Dendritic cell treated with granulocyte-macrophage colony-stimulating factor and Interleukin-4, amounts not matched to agents 40 ng/mL and 50 ng/mL, for 4 days (primary cell): ENCODE measurements at regions of chr3 and their contacts with region 1.

Region 1: GRCh38 chr3:99817437-99818240 is at the start of gene CMSS1:
- H3K4me3 Mint-ChIP-seq: peak within 1 kb of the TSS; percentile 92
- H3K27ac Mint-ChIP-seq: peak within 1 kb of the TSS; percentile 96
- H3K4me1 Mint-ChIP-seq: peaks cover 10% of the 10 kb centered on the region
- H3K27me3 Mint-ChIP-seq: no peaks in the 10 kb centered on the region

Region 2: DNA sequence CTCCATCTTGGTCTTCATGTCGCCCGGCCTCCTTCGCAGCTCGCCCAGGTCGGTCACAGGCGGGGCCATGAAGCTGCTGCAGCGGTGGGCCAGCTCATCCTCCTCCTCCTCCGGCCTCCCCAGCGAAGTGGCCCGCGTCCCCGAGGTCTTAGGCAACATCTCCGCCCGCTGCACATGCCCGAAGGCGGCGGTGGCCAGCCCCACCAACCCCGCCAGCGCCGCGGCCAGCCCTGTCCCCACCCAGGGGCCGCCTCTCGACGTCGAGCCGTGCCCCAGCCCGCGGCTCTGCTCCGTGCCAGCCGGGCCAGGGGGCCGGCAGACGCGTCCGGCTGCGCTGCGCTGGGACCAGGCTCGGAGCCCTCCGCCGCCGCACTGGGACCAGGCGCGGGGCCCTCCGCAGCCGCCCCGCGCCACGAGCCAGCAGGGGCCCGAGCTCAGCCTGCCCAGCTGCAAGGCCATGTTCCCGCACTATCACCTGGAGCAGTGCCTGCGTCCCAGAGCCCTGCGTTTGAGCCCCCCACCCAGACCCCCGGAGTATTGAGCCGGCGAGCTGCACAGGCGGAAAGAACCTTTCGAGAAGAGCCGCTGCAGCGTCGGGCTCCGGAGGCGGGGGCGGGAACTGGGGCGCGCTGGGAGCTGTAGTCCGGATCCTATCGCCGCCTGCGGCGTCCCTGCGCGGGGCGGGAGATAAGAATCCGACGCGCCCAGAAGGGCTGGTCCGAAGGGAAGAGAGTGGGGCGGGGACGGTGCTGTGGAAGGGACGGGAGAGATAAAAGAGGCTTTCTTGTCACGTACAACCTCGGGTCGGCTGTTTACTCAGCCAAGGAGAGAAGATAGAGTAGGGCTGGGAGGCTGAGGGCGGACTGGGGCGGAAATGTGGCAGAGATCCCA is 1224.3 kb before region 1 on chr3 and contains the start of gene CPOX:
- intact Hi-C with region 1: loop called (anchors 10 kb)
- H3K4me3 Mint-ChIP-seq: peak within 1 kb of the TSS; percentile 97
- H3K27ac Mint-ChIP-seq: peak within 1 kb of the TSS; percentile 82
- H3K4me1 Mint-ChIP-seq: peaks cover 60% of the 10 kb centered on the region
- H3K27me3 Mint-ChIP-seq: no peaks in the 10 kb centered on the region

Region 3: GRCh38 chr3:99875929-99876841 is 58.5 kb after region 1 on chr3:
- intact Hi-C with region 1: loop called (anchors 5 kb)
- H3K4me3 Mint-ChIP-seq: peak overlapping the region; percentile 74
- H3K27ac Mint-ChIP-seq: peak overlapping the region; percentile 92
- H3K4me1 Mint-ChIP-seq: peaks cover 36% of the 10 kb centered on the region
- H3K27me3 Mint-ChIP-seq: no peaks in the 10 kb centered on the region

Region 4: DNA sequence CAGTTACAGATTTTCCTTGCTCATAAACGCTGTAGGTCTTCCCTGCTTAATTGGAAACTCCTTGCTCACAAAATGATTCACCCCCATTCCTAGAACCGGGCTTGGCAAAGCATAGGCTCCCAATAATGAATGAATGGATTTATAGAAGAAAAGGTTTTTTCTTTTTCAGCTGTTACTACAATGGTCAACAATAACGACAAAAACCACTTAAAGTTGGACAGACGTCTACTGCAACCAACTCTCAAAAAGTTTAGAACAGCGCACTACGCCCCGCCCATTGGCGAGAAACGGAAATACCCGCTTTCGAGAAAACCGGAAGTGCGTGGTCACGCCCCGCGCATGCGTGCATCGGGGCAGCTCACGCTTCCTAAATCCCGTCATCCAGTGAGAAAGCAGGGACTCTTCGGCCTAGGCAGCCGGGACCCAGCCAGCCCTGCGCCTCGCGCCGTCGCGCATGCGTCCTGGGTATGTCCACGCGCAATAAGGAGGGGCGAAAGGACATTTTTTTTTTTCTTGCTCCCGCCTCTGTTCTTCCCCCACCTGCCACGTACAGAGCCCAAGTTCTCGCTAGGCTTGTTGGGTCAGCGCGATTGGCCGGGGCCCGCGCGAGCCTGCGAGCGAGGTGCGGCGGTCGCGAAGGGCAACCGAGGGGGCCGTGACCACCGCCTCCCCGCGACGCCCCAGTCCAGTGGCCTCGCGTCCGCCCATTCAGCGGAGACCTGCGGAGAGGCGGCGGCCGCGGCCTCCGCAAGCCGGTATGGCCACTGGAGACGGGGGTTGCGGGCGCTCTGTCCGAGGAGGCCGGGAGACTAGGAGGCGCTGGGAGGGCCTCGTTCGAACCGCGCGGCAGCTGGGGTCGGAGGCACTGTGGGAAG is 891.6 kb after region 1 on chr3 and contains the start of gene TFG:
- intact Hi-C with region 1: loop called (anchors 5 kb)
- H3K4me3 Mint-ChIP-seq: peak within 1 kb of the TSS; percentile 92
- H3K27ac Mint-ChIP-seq: peak within 1 kb of the TSS; percentile 96
- H3K4me1 Mint-ChIP-seq: peaks cover 38% of the 10 kb centered on the region
- H3K27me3 Mint-ChIP-seq: peaks cover 10% of the 10 kb centered on the region